Activated CD4-positive, alpha-beta T cell treated with anti-CD3 and anti-CD28 coated beads, Interleukin-2, amount 10 ng/mL, durations not matched to agents 24 days and 14 days (primary cell): ENCODE measurements at regions of chr20 and their contacts with region 1.

Region 1: DNA sequence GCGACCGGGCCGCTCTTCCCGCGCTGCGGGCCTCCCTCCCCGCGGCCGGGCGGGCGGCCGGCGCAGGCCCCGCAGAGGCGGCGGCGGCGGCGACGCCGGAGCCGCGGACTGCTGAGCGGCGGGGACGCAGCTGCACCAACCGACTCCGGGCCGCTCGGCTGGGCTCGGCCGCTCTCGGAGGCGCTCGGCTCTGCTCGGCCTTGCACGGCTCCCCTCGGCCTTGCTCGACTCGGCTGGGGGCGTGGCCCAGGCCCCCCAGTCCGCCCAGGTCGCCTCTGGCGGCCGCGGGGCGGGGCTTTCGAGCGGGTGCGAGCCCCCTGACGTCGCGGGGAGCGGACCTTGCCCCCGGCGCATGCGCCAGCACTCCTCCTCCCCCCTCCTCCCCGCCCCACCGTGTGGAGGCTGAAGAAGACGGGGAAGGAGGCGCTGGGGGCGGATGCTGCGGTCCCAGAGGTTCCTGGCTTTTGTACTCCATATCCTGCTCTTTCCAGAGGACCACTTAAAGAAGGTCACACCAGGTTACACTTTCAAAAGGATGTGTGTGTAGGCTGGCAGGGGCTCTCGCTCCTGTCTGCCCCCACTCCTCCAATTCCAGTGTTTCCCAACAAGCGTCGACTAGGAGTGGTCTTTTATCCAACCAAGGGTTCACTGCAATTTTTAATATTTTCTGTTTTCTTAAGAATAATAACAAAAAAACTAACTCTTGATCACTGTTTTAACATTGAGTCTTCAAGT is at the start of gene ZHX3:
- DNase-seq: peak; percentile 99
- H3K4me3 Mint-ChIP-seq: peak within 1 kb of the TSS; percentile 88
- H3K27ac Mint-ChIP-seq: peak within 1 kb of the TSS; percentile 87
- H3K4me1 Mint-ChIP-seq: peaks cover 20% of the 10 kb centered on the region
- H3K27me3 Mint-ChIP-seq: peaks cover 8% of the 10 kb centered on the region
- total RNA-seq, gene ZHX3: 11.2 and 11.7 TPM in 2 replicates

Region 2: GRCh38 chr20:41028348-41029148 is 289.2 kb before region 1 on chr20 and contains the start of gene TOP1:
- intact Hi-C with region 1: loop called (anchors 10 kb)
- DNase-seq: peak; percentile 100
- H3K4me3 Mint-ChIP-seq: peak within 1 kb of the TSS; percentile 84
- H3K27ac Mint-ChIP-seq: peak within 1 kb of the TSS; percentile 95
- H3K4me1 Mint-ChIP-seq: peaks cover 42% of the 10 kb centered on the region
- H3K27me3 Mint-ChIP-seq: no peaks in the 10 kb centered on the region
- total RNA-seq, gene TOP1: 117 TPM in 2 replicates

Region 3: DNA sequence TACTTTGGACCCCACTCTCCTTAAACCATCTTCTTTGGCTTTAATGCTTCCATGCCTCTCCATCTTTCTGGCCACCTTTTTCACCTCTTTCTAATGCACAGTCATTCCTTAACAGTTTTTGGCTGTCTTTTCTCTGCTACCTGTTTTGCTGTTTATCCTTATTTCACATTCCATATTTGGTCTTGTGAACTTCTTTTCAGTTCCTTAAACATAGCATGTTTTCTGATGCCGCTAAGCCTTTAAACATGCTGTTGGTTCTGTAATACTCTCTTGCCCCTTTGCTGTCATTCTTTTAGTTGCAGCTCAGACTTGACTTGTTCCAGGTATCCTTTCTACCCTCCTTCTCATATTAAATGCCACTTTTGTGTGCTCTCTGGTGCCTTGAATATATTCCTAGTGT is 253.3 kb before region 1 on chr20:
- intact Hi-C with region 1: no loop called
- DNase-seq: no peak
- H3K4me3 Mint-ChIP-seq: no peak overlapping the region
- H3K27ac Mint-ChIP-seq: no peak overlapping the region
- H3K4me1 Mint-ChIP-seq: peaks cover 30% of the 10 kb centered on the region
- H3K27me3 Mint-ChIP-seq: no peaks in the 10 kb centered on the region

Region 4: DNA sequence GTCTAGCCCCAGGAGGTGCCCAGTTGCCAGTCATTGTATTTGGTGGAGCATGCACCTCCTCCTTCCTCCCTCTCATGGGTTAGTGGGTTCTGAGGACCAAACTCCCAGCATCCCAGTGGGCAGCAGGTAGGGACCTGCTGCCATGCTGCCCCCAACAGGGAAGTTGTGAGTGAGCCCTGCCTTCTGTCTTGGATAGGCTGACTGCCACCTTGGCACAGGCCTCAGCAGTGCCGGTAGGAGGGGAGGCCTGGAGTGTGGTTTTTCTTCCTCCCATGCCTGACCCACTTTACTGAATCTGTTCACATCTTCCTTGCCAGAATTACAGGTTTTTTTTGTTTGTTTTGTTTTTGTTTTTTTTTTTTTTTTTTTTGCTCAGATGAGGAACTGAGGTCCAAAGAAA is 155.8 kb before region 1 on chr20:
- intact Hi-C with region 1: loop called (anchors 1 kb)
- DNase-seq: no peak
- H3K4me3 Mint-ChIP-seq: no peak overlapping the region
- H3K27ac Mint-ChIP-seq: peak overlapping the region; percentile 61
- H3K4me1 Mint-ChIP-seq: peaks cover 66% of the 10 kb centered on the region
- H3K27me3 Mint-ChIP-seq: peaks cover 2% of the 10 kb centered on the region

Region 5: GRCh38 chr20:41287327-41287726 is 30.4 kb before region 1 on chr20:
- intact Hi-C with region 1: no loop called
- DNase-seq: no peak
- H3K4me3 Mint-ChIP-seq: no peak overlapping the region
- H3K27ac Mint-ChIP-seq: no peak overlapping the region
- H3K4me1 Mint-ChIP-seq: no peaks in the 10 kb centered on the region
- H3K27me3 Mint-ChIP-seq: peaks cover 4% of the 10 kb centered on the region

Region 6: DNA sequence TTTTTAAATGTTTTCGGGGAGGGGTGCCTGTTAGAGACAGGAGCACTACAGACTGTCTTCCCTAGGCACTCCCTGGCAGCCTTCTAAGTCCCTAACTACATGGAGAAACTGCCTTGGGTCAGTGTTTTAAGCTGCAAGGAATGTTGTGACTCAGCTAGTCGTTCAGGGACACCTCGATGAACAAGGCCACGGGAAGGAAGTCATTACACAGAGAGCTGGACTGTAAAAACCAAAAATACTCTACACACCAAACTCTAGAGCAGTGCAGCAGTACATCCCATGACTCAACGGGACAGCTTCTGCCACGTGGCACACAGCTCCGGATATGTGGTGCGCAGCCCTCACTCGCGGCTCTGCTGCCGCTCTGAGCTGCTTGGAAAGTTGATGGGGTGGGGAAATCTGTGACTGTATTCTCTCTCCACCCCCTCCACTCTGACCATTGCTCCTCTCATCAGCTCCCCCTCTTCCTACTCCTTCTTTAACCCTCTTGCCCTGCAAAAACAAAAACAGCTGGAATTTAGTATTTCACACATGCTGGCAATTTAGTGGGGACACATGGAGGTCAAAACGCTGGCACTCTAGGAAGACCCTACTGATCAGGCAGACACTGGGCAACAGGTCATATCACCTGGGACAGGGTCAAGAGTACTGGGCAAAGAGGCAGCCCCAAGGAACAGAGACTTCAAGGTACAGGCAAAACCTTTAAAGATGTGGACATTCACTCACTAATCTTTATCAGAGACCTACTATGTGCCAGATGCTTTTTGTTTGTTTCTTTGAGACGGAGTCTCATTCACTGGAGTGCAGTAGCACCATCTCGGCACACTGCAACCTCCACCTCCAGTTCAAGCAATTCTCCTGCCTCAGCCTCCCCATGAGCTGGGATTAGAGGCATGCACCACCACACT is 12.0 kb after region 1 on chr20:
- intact Hi-C with region 1: loop called (anchors 1 kb)
- DNase-seq: peak; percentile 86
- H3K4me3 Mint-ChIP-seq: no peak overlapping the region
- H3K27ac Mint-ChIP-seq: peak overlapping the region; percentile 83
- H3K4me1 Mint-ChIP-seq: peaks cover 12% of the 10 kb centered on the region
- H3K27me3 Mint-ChIP-seq: peaks cover 3% of the 10 kb centered on the region

Region 7: GRCh38 chr20:41339507-41340326 is 22.0 kb after region 1 on chr20:
- intact Hi-C with region 1: loop called (anchors 1 kb)
- DNase-seq: peak; percentile 96
- H3K4me3 Mint-ChIP-seq: peak overlapping the region; percentile 84
- H3K27ac Mint-ChIP-seq: peak overlapping the region; percentile 43
- H3K4me1 Mint-ChIP-seq: peaks cover 10% of the 10 kb centered on the region
- H3K27me3 Mint-ChIP-seq: peaks cover 10% of the 10 kb centered on the region

Region 8: DNA sequence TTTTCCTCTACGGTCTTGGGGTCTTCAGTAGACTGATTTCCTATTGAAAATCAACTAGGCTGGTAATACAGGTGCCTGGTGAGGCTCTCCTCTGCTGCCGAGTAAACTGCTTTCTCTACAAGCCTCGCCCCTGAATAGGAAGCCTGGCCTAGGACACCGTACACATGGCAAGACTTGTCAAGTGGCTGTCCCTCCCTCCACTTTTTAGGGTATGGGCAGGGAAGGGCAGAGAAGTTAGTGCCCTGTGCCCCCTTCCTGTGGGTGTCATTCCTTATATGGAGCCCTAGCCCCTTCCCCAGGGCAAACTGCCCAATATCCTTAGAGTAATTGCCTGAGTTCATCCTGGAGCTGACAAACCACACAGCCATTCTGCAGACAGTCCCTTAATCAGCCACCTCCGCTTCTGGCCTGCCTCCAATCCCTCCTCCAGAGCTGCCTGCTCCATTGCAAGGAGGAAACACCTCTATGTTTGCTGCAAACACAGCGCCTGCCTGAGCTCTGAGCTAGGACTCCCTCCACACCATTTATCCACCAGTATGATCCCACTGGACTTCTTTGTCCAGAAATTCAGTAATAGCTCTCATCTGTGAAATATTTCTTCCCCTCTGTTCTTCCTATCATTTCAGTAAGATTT is 207.4 kb after region 1 on chr20:
- intact Hi-C with region 1: no loop called
- DNase-seq: no peak
- H3K4me3 Mint-ChIP-seq: no peak overlapping the region
- H3K27ac Mint-ChIP-seq: no peak overlapping the region
- H3K4me1 Mint-ChIP-seq: peaks cover 4% of the 10 kb centered on the region
- H3K27me3 Mint-ChIP-seq: no peaks in the 10 kb centered on the region

Region 9: DNA sequence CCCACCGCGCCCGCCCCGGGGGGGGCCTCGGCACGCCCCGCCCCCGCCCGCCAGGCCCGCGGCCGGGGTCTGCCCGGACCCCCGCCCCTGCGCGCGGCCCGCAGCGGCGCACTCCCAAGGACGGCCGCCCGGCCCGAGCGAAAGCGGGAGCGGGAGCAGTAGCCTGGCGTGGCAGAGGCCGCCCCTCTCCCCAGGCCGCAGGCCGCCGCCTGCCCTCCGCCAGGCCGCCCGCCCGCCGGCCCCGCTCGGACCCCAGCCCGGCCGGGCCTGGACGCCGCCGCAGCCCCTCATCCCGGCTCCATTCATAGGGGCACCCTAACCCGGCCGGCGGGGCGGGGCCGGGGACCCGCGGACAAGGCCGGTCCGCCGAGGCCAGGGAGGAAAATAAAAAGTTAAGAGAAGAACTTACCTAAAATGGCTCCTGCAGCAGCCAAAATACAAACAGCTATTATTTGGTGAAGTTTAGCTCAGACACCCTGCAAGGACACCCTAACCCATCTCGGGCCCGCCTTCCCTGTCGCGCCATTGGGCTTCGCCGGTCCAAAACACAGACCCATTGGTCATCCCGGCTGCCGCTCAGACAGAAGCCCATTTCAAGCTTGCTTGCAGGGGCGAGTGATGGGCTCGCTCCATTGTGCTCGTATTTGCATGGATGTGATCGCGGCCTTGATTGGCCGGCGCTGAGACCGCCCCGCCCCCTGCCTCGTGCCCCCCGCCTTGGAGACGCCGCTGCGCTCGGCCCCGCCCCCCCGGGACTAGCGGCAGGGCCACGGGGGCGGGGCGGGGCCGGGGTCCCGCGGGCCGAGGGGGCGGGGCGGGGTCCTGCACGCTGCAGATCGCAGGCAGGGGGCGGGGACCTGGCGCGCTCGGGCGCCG is 300.5 kb after region 1 on chr20 and contains the start of gene CHD6:
- intact Hi-C with region 1: loop called (anchors 5 kb)
- DNase-seq: peak; percentile 100
- H3K4me3 Mint-ChIP-seq: peak within 1 kb of the TSS; percentile 89
- H3K27ac Mint-ChIP-seq: peak within 1 kb of the TSS; percentile 86
- H3K4me1 Mint-ChIP-seq: peaks cover 31% of the 10 kb centered on the region
- H3K27me3 Mint-ChIP-seq: peaks cover 26% of the 10 kb centered on the region
- total RNA-seq, gene CHD6: 31.8 and 34.6 TPM in 2 replicates

Region 10: DNA sequence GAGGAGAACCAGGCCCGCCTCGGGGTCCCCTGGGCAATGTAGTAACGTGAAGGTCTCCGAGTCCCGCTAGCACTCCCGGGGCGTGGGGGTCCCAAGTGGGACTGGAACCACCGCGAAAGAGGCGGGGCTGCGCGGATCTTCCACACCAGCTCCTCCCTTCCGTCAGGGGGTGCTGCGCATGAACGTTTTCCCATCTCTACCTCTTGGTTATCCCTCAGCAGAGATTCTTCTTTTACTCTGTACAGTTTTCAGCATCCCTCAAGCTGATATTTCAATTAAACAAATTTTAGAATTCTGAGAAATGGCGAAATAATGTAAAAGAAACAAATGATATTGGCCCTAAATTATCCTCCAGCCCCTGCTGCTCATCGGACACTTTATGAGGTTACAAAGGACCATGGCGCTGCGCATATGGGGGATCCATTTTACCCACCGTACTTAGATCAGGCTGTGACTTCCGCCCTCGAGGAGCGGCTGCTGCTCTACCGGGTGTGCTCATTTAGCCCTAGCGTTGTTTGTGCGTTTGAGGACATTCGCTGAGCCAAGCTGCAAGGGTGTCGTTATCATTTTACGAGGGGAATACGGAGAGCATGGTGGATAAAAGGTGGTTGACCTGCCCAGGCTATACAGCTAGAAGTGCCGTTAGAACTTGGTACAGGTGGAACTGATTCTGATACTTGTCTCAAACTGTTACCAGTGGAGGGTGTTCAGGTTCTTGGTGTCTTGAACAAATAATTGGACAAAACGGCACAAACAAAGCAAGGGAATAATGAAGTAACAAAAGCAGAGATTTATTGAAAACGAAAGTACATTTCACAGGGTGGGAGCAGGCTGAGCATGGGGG is 375.7 kb after region 1 on chr20:
- intact Hi-C with region 1: loop called (anchors 2 kb)
- DNase-seq: peak; percentile 93
- H3K4me3 Mint-ChIP-seq: peak overlapping the region; percentile 91
- H3K27ac Mint-ChIP-seq: peak overlapping the region; percentile 97
- H3K4me1 Mint-ChIP-seq: peaks cover 20% of the 10 kb centered on the region
- H3K27me3 Mint-ChIP-seq: peaks cover 2% of the 10 kb centered on the region